H1 (cell line): ENCODE measurements at regions of chr7 and their contacts with region 1.

Region 1: GRCh38 chr7:134355927-134356326 is 39.2 kb upstream of the SLC35B4 start:
- DNase-seq: no peak
- H3K4me3 ChIP-seq: no peak overlapping the region
- H3K27ac ChIP-seq: no peak overlapping the region
- H3K4me1 ChIP-seq: no peaks in the 10 kb centered on the region
- H3K27me3 ChIP-seq: no peaks in the 10 kb centered on the region
- CTCF ChIP-seq: no peak
- EP300 ChIP-seq: no peak
- POLR2A ChIP-seq: no peak
- RAD21 ChIP-seq: no peak

Region 2: DNA sequence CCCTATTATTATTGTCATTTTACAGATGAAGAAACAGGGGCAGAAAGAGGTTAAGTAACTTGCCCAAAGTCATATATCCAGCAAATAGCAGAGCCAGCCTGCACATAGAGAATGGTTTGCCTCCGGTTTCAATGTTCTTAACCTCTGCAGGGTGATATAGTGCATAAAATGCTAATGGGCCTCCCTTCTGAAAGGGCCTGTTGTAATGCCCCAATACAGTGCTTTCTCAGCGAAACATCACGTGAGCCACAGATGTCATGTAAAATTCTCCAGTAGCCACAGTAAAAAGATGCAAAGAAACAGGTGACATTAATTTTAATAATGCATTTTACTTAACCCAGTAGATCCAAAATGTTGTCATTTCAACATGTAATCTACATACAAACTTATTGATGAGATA is 190.7 kb before region 1 on chr7:
- CTCF ChIA-PET with region 1: no interaction called
- POLR2A ChIA-PET with region 1: no interaction called
- DNase-seq: no peak
- H3K4me3 ChIP-seq: no peak overlapping the region
- H3K27ac ChIP-seq: no peak overlapping the region
- H3K4me1 ChIP-seq: no peaks in the 10 kb centered on the region
- H3K27me3 ChIP-seq: no peaks in the 10 kb centered on the region
- CTCF ChIP-seq: no peak
- EP300 ChIP-seq: no peak
- POLR2A ChIP-seq: no peak
- RAD21 ChIP-seq: no peak

Region 3: GRCh38 chr7:134327896-134328295 is 28.0 kb before region 1 on chr7:
- CTCF ChIA-PET with region 1: interaction called, 10 read pairs
- POLR2A ChIA-PET with region 1: no interaction called
- DNase-seq: peak; percentile 61 to 81
- H3K4me3 ChIP-seq: no peak overlapping the region
- H3K27ac ChIP-seq: no peak overlapping the region
- H3K4me1 ChIP-seq: no peaks in the 10 kb centered on the region
- H3K27me3 ChIP-seq: no peaks in the 10 kb centered on the region
- CTCF ChIP-seq: peak; percentile 51 to 88 (median 72)
- EP300 ChIP-seq: no peak
- POLR2A ChIP-seq: no peak
- RAD21 ChIP-seq: peak; percentile 90 to 91

Region 4: DNA sequence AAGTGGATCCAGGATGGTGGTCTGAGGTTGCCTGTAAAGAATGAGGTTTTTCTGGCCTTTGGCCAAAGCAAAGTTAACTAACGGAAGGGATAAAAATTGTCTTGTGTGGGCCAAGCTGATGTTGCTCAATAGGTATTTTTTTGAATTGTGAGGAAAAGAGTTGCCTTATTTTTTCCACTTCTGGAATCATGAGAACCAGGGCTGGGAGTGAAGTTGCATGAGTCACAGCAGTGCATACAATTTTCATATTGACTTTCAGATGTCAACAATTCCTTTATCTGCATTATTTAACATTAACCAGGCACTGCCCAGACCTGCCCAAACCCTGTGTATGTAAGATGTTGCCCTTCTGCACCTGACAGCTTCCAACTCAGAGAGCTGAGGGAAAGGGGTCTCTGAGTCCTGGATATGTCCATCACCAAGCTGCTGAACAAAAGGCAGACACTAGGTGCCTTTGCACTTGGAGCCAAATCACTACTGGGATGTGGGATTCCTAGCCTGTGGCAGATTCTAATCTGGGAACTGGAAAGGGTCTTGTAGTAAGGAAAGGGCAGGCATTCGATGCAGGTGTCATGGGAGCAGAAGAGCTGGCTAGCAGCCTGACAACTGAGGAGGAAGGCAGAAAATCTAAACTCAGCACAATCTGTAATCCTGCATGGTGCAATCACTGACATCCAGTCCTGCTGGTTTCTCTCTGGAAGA is 13.1 kb after region 1 on chr7:
- CTCF ChIA-PET with region 1: interaction called, 33 read pairs
- POLR2A ChIA-PET with region 1: no interaction called
- DNase-seq: no peak
- H3K4me3 ChIP-seq: no peak overlapping the region
- H3K27ac ChIP-seq: no peak overlapping the region
- H3K4me1 ChIP-seq: no peaks in the 10 kb centered on the region
- H3K27me3 ChIP-seq: no peaks in the 10 kb centered on the region
- CTCF ChIP-seq: no peak
- EP300 ChIP-seq: no peak
- POLR2A ChIP-seq: no peak
- RAD21 ChIP-seq: no peak

Region 5: DNA sequence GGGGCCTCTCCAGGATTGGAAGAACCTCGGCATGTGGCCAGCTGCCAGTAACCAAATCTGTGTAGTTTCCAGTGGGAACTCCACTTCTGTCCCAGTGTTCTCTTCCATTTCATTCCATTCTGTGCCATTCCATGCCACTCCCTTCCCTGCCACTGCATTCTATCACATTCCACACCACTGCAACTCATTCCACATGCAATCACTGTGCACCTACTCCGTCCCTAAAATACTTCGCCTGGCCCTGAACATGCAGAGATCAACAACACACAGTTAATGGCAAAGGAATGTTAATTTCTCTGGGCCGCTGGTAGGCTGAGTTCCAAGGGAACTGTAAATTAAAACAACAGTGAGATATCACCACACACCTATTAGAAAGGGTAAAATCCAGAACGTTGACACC is 38.1 kb after region 1 on chr7:
- CTCF ChIA-PET with region 1: interaction called, 13 read pairs
- POLR2A ChIA-PET with region 1: no interaction called
- DNase-seq: no peak
- H3K4me3 ChIP-seq: no peak overlapping the region
- H3K27ac ChIP-seq: no peak overlapping the region
- H3K4me1 ChIP-seq: no peaks in the 10 kb centered on the region
- H3K27me3 ChIP-seq: no peaks in the 10 kb centered on the region
- CTCF ChIP-seq: no peak
- EP300 ChIP-seq: no peak
- POLR2A ChIP-seq: no peak
- RAD21 ChIP-seq: no peak